ENCODE measurements at regions of chr10 and their contacts with region 1.

Region 1: DNA sequence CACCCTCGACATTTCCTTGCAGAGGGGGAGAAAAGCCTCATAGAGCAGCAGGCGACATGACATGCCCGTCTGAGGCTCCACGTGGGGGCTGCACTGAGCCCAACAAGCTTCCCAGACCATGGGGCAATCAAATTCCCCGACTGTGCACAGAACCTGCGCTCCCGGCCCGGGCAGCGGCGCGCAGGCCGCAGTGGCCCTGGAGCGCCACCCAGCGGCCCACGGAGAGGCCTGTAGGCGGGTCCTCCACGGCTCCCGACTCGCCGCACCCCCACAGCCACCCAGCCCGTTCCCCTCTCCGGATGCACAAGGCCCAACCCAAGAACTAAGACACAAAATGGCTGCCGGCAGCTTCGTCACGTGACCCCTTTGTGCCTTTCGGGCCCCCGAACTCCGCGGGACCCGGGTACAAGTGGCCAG is 816 bp downstream of the EPC1 start:
- DNase-seq: peak; percentile 93 to 100 (median 98)
- ATAC-seq: peak; percentile 98
- H3K4me3 ChIP-seq: peak overlapping the region; percentile 77 to 78
- H3K27ac ChIP-seq: peak overlapping the region; percentile 100
- H3K4me1 ChIP-seq: peaks cover 22 to 62% of the 10 kb centered on the region in 2 donors
- H3K27me3 ChIP-seq: no peaks in the 10 kb centered on the region
- CTCF ChIP-seq: peak; percentile 93 to 99

Region 2: GRCh38 chr10:32256613-32257437 is 89.3 kb before region 1 on chr10:
- intact Hi-C with region 1: loop called in 1 of 2 experiments (anchors 10 kb)
- DNase-seq: peak in 3 of 4 donors; percentile 49 to 61 (median 60)
- ATAC-seq: peak; percentile 93
- H3K4me3 ChIP-seq: no peak overlapping the region
- H3K27ac ChIP-seq: no peak overlapping the region
- H3K4me1 ChIP-seq: peaks cover 0 to 9% of the 10 kb centered on the region in 2 donors
- H3K27me3 ChIP-seq: no peaks in the 10 kb centered on the region
- CTCF ChIP-seq: peak; percentile 82 to 89